IMR-90 (cell line): ENCODE measurements at regions of chr15 and their contacts with region 1.

Region 1: DNA sequence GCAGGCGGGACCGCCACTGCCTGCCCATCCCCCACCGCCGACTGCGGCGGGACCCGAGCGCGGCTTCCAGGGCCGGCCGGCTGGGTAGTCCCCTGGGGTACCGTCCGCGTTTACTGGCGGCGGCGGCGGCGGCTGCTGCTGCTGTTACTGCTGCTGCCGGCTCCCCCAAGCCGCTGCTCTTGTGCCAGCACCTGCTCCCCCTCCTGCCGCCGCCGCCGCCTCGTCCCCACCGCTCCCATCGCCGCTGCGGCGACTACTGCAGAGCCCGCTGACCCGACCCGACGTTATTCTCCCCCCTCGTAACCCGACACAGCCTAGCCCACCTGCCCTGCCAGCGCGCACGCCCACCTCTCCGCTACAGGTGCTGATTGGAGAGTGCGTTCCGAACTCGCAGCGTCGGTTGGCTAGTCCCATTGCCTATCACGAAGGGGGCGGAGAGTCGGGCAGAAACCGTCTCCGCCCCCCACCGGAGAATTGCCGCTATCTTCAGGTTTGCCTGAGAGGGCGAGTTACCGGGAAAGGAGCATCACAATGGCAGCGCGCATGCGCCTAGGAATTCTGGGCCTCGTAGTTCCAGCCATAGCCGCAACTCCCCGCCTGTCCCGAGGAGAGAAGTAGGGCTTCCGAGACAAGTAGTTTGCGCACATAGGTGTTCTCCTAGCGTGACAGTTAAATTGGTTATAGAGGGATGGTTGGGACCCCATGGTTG is at the start of gene TTBK2:
- DNase-seq: peak; percentile 99
- ATAC-seq: peak; percentile 99
- H3K4me3 ChIP-seq: peak within 1 kb of the TSS; percentile 97
- H3K27ac ChIP-seq: peak within 1 kb of the TSS; percentile 77
- H3K4me1 ChIP-seq: no peaks in the 10 kb centered on the region
- H3K27me3 ChIP-seq: no peaks in the 10 kb centered on the region
- CTCF ChIP-seq: peak; percentile 20; the same call in 1 of the 2 replicates
- POLR2A ChIP-seq: no peak; the same call in 1 of the 2 replicates
- RAD21 ChIP-seq: no peak
- total RNA-seq, gene TTBK2: 3.2 and 5.6 TPM in 2 replicates

Region 2: DNA sequence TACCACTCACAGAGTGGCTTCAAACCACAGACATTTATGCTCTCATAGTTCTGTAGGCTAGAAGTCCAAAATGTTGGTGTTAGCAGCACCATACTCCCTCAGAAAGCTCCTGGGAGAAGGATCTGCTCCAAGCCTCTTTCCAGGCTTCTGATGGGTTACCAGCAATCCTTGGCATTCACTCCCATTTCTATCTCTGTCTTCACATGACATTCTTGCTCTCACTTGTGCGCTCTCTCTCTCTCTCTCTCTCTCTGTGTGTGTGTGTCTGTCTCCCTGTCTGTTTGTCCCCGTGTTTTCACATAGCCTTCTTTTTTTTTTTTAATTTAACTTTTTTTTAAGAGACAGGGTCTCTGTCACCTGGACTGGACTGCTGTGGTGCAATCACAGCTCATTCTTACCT is 210.0 kb before region 1 on chr15:
- CTCF ChIA-PET with region 1: no interaction called
- POLR2A ChIA-PET with region 1: no interaction called
- dilution Hi-C with region 1: no loop called
- in situ Hi-C with region 1: loop called (anchors 5 kb)
- intact Hi-C with region 1: no loop called
- DNase-seq: no peak
- ATAC-seq: no peak
- H3K4me3 ChIP-seq: no peak overlapping the region
- H3K27ac ChIP-seq: no peak overlapping the region
- H3K4me1 ChIP-seq: peaks cover 1% of the 10 kb centered on the region; the same call in 1 of the 2 replicates
- H3K27me3 ChIP-seq: no peaks in the 10 kb centered on the region
- CTCF ChIP-seq: no peak
- POLR2A ChIP-seq: no peak
- RAD21 ChIP-seq: no peak

Region 3: DNA sequence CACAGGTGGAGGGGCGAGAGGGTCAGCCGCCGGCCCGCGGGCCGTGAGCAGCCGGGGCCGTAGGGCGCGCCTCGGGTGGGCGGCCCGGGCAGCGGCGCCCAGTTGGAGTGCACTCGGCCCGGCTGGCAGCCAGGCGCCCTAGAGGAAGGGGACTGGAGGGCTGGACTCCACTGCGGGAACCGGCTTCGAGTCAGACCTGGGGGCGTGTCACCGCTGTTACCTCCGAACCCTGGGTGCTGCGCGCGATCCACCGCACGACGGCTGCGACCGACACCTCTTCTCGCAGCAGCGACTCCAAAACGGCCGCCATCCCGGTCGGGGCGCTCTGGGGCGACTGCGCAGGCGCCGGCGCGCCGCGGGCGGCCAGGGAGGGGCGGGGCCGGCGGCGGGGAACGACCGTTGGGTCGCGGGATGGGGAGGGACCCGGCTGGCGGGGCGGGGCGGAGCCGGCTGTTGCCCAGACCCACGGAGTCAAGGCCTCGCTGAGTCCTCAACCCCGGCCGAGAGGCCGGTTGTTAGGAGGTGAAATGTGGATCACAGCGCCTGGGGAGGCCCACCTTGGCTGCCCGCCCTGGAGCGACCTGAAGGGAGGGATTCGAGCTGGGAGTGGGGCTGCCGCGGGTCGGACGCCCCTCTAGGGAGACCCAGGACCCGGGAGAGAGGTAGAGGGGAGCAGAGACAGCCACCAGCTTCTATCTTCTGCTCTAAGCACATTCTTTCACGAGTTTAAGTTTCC is 183.7 kb before region 1 on chr15 and contains the start of gene CDAN1:
- CTCF ChIA-PET with region 1: no interaction called
- POLR2A ChIA-PET with region 1: no interaction called
- dilution Hi-C with region 1: no loop called
- in situ Hi-C with region 1: no loop called
- intact Hi-C with region 1: loop called (anchors 1 kb)
- DNase-seq: peak; percentile 75
- ATAC-seq: peak; percentile 99
- H3K4me3 ChIP-seq: peak within 1 kb of the TSS; percentile 90
- H3K27ac ChIP-seq: peak within 1 kb of the TSS; percentile 88
- H3K4me1 ChIP-seq: peaks cover 8% of the 10 kb centered on the region
- H3K27me3 ChIP-seq: no peaks in the 10 kb centered on the region
- CTCF ChIP-seq: no peak
- POLR2A ChIP-seq: peak; percentile 64; the same call in 1 of the 2 replicates
- RAD21 ChIP-seq: no peak
- total RNA-seq, gene CDAN1: 4.7 TPM in 2 replicates

Region 4: GRCh38 chr15:42796955-42797779 is 123.5 kb before region 1 on chr15:
- CTCF ChIA-PET with region 1: no interaction called
- POLR2A ChIA-PET with region 1: no interaction called
- dilution Hi-C with region 1: no loop called
- in situ Hi-C with region 1: no loop called
- intact Hi-C with region 1: loop called (anchors 5 kb)
- DNase-seq: peak; percentile 1
- ATAC-seq: no peak
- H3K4me3 ChIP-seq: no peak overlapping the region
- H3K27ac ChIP-seq: no peak overlapping the region
- H3K4me1 ChIP-seq: peaks cover 2% of the 10 kb centered on the region; the same call in 1 of the 2 replicates
- H3K27me3 ChIP-seq: no peaks in the 10 kb centered on the region
- CTCF ChIP-seq: 0 out of 2 replicates have a peak, but pooled peaks have one; percentile 14
- POLR2A ChIP-seq: no peak
- RAD21 ChIP-seq: peak; percentile 27; the same call in 1 of the 2 replicates

Region 5: DNA sequence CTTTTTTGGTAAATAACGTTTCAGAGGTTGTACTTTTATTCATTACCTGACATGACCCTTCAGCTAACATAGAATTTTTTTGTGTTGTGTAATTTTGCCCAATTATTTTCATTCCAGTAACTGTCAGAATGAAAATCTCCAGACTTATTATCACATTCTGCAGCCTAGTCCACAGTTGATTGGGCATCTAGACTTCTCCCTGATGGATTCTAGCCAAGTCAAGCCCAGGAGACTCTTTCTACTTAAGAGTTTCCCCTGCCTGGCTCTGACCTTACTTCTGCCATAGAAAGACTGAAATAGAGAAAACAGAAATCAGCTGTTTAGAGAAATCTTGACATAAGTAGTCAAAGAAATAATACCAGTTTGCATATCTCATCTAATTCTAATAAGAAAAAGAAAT is 100.9 kb before region 1 on chr15:
- CTCF ChIA-PET with region 1: no interaction called
- POLR2A ChIA-PET with region 1: no interaction called
- dilution Hi-C with region 1: no loop called
- in situ Hi-C with region 1: no loop called
- intact Hi-C with region 1: no loop called
- DNase-seq: no peak
- ATAC-seq: no peak
- H3K4me3 ChIP-seq: no peak overlapping the region
- H3K27ac ChIP-seq: no peak overlapping the region
- H3K4me1 ChIP-seq: no peaks in the 10 kb centered on the region
- H3K27me3 ChIP-seq: no peaks in the 10 kb centered on the region
- CTCF ChIP-seq: no peak
- POLR2A ChIP-seq: no peak
- RAD21 ChIP-seq: no peak